Activated T-helper 1 cell treated with anti-CD3 and anti-CD28 coated beads, Interleukin-12 subunit alpha, Interleukin-12 subunit beta, Interleukin-2, Interleukin-4 antibody, amounts not matched to agents 30 ng/mL and 10 ng/mL and 1 ng/mL, durations not matched to agents 14 hours and 24 hours and 36 hours (primary cell): ENCODE measurements at regions of chr18 and their contacts with region 1.

Region 1: DNA sequence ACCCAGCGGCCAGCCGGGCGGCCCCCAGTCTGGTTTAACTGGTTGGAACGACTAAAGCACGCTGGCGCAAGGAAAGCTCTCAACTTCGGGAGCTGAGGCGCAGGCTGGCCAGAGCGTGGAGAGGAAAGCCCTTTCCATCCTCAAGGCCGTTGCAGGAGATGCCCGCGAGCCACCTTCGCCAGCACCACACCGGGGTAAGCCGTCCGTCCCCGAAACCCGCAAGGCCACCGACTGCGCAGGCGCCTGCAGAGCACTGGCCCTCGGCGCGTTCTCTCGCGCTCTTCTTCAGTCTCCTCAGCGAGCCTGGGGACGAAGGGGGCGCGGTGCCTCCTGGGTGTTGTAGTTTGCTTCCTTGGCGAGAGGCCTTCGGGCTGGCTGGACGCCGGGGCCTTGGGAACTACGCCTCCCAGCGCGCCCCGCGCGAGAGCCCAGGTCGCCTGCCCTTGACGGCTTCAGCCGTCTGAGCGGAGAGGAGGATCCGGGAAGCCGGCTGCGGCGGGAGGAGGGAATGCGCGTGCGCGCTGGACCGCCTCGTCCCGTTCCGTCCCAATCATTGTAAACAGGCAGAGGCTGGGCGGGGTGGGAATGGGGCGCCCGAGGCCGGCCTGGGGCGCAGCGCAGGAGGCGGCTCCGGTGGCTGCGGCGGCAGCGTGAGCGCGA is at the start of gene RALBP1:
- DNase-seq: peak; percentile 98
- H3K4me3 Mint-ChIP-seq: peak within 1 kb of the TSS; percentile 89
- H3K27ac Mint-ChIP-seq: peak within 1 kb of the TSS; percentile 95
- H3K4me1 Mint-ChIP-seq: peaks cover 30% of the 10 kb centered on the region
- H3K27me3 Mint-ChIP-seq: peaks cover 4% of the 10 kb centered on the region
- total RNA-seq, gene RALBP1: 40.9 and 42.4 TPM in 2 replicates

Region 2: DNA sequence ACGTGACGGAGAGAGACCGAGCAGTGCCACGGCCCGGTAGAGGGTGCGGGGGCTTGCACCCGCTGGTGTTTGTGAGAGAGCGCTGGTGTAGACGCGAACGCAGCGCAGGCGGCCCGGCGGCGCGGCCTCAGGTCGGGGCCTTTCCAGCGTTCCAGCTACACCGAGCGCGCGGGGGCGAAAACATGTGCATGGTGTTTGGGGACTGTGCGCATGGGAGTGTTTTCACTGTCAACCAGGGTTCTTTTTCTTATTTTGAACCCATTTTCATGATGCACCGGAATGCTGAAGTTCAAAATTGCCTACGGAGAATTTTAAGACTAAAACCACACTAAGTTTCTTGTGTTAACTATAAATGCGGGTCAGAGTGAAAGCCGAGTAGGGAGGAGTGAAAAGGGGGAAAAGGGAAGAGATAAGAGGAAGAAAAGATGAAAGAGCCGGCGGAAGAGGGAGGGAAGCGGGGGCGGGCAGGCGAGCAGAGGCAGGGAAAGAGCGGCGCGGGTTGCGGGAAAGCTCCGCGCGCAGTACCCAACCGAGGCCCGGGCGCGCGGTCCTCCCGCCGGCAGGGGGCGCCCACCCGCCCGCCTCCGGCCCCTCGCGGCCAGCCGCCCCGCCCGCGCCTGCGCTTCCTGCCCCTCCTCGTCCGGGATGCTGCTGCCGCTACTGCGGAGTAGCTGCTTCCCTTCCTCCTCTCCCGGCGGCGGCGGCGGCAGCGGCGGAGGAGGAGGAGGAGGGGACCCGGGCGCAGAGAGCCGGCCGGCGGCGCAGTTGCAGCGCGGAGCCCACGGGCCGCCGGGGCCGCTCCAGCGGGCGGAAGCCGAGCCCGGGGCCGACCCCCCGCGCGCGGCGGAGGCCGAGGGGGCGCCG is 866.1 kb before region 1 on chr18 and contains the start of gene RAB12:
- intact Hi-C with region 1: loop called (anchors 1 kb)
- DNase-seq: peak; percentile 83
- H3K4me3 Mint-ChIP-seq: peak within 1 kb of the TSS; percentile 91
- H3K27ac Mint-ChIP-seq: peak within 1 kb of the TSS; percentile 88
- H3K4me1 Mint-ChIP-seq: peaks cover 50% of the 10 kb centered on the region
- H3K27me3 Mint-ChIP-seq: peaks cover 12% of the 10 kb centered on the region
- total RNA-seq, gene RAB12: 18.9 and 19.2 TPM in 2 replicates

Region 3: GRCh38 chr18:9017170-9017904 is 457.8 kb before region 1 on chr18:
- intact Hi-C with region 1: loop called (anchors 2 kb)
- DNase-seq: peak; percentile 40
- H3K4me3 Mint-ChIP-seq: peak overlapping the region; percentile 64
- H3K27ac Mint-ChIP-seq: peak overlapping the region; percentile 75
- H3K4me1 Mint-ChIP-seq: peaks cover 10% of the 10 kb centered on the region
- H3K27me3 Mint-ChIP-seq: peaks cover 4% of the 10 kb centered on the region

Region 4: GRCh38 chr18:9433671-9434121 is 41.4 kb before region 1 on chr18:
- intact Hi-C with region 1: no loop called
- DNase-seq: no peak
- H3K4me3 Mint-ChIP-seq: no peak overlapping the region
- H3K27ac Mint-ChIP-seq: no peak overlapping the region
- H3K4me1 Mint-ChIP-seq: no peaks in the 10 kb centered on the region
- H3K27me3 Mint-ChIP-seq: no peaks in the 10 kb centered on the region

Region 5: DNA sequence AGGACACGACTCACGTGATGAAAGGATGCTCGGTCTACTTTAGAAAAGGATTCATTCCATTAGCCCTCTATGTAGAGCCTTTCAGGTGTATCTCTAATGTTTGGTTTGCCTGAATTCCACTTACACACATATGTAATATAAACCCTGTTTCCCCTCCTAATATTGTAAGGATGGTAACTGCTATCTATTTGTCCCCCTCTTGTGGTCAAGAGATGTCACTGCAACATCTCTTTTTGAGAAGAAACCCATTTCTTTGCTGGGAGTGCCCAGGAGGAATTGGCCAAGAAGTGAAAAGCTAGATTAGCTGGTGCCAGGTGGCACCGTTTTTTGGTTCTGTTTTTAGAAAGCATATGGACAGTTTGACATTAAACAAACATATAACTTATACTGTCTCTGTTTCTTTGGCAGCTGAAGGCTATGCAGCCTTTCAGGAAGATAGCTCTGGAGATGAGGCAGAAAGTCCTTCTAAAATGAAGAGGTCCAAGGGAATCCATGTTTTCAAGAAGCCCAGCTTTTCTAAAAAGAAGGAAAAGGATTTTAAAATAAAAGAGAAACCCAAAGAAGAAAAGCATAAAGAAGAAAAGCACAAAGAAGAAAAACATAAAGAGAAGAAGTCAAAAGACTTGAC is 41.4 kb after region 1 on chr18:
- intact Hi-C with region 1: loop called (anchors 1 kb)
- DNase-seq: no peak
- H3K4me3 Mint-ChIP-seq: no peak overlapping the region
- H3K27ac Mint-ChIP-seq: no peak overlapping the region
- H3K4me1 Mint-ChIP-seq: peaks cover 12% of the 10 kb centered on the region
- H3K27me3 Mint-ChIP-seq: no peaks in the 10 kb centered on the region